PC-9 (cell line): ENCODE measurements at regions of chr1 and their contacts with region 1.

Region 1: DNA sequence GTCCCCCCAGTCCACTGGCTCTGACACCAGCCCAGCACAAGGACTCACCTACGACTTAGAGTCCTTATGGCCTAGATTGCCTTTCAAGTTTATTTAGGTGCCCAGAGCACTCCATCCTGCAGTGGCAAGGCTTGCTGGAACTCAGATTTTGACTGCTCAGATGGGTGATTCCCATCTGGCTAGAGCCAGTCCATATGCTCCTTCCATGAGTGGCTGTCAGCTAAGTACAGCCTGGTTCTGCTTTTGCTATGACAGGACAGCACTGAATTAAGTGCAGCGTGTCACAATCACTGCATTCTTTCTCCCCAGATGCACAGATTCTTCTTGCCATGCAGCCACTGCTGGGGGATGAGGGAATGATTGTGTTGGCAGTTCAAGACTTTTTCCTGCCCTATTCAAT is 43.8 kb downstream of the GPR52 start:
- DNase-seq: no peak
- H3K4me3 ChIP-seq: no peak overlapping the region
- H3K27ac ChIP-seq: no peak overlapping the region
- H3K4me1 ChIP-seq: no peaks in the 10 kb centered on the region
- H3K27me3 ChIP-seq: no peaks in the 10 kb centered on the region
- CTCF ChIP-seq: no peak

Region 2: GRCh38 chr1:174448974-174449373 is 42.6 kb before region 1 on chr1:
- CTCF ChIA-PET with region 1: no interaction called
- POLR2A ChIA-PET with region 1: no interaction called
- intact Hi-C with region 1: no loop called
- DNase-seq: no peak
- H3K4me3 ChIP-seq: no peak overlapping the region
- H3K27ac ChIP-seq: no peak overlapping the region
- H3K4me1 ChIP-seq: no peaks in the 10 kb centered on the region
- H3K27me3 ChIP-seq: no peaks in the 10 kb centered on the region
- CTCF ChIP-seq: no peak

Region 3: DNA sequence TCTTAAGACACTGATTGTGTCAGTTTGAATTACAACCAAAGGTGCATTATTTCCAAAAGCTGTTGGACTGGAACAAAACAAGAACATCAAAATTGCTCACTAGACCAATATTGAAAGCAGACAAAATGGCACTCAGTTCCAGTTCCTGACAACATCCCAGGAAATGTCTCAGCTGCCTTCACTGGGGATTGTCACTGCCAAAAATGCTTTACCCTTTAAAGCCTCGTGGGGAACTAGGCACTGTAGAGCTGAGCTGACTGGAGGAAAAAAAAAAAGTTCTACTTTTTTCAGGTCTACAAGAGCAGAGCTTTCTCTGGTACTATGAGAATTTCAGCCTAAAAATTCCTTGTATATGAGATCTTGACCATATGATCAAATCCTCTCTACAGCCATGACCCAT is 21.9 kb before region 1 on chr1:
- CTCF ChIA-PET with region 1: no interaction called
- POLR2A ChIA-PET with region 1: no interaction called
- intact Hi-C with region 1: loop called (anchors 2 kb)
- DNase-seq: no peak
- H3K4me3 ChIP-seq: no peak overlapping the region
- H3K27ac ChIP-seq: no peak overlapping the region
- H3K4me1 ChIP-seq: no peaks in the 10 kb centered on the region
- H3K27me3 ChIP-seq: no peaks in the 10 kb centered on the region
- CTCF ChIP-seq: no peak